Sigmoid colon (tissue), 7 donors: ENCODE measurements at regions of chr6 and their contacts with region 1.

Region 1: GRCh38 chr6:170291271-170292110 is 613 bp upstream of the DLL1 start:
- DNase-seq: peak; percentile 88
- H3K4me3 ChIP-seq: peak overlapping the region; percentile 48 to 69 (median 61)
- H3K27ac ChIP-seq: peak overlapping the region; percentile 49 to 64 (median 52)
- H3K4me1 ChIP-seq: peaks cover 0 to 62% (median 60%) of the 10 kb centered on the region in 4 donors
- H3K27me3 ChIP-seq: peaks cover 65 to 92% (median 89%) of the 10 kb centered on the region in 3 donors
- CTCF ChIP-seq: no peak
- EP300 ChIP-seq: no peak
- POLR2A ChIP-seq: no peak

Region 2: GRCh38 chr6:169789982-169790927 is 501.2 kb before region 1 on chr6:
- intact Hi-C with region 1: loop called (anchors 5 kb)
- DNase-seq: peak; percentile 90
- H3K4me3 ChIP-seq: peak overlapping the region; percentile 18 to 52 (median 48)
- H3K27ac ChIP-seq: peak overlapping the region; percentile 76 to 85 (median 79)
- H3K4me1 ChIP-seq: peaks cover 0 to 15% (median 11%) of the 10 kb centered on the region in 4 donors
- H3K27me3 ChIP-seq: no peaks in the 10 kb centered on the region
- CTCF ChIP-seq: peak; percentile 87 to 98 (median 96)
- EP300 ChIP-seq: no peak
- POLR2A ChIP-seq: no peak

Region 3: DNA sequence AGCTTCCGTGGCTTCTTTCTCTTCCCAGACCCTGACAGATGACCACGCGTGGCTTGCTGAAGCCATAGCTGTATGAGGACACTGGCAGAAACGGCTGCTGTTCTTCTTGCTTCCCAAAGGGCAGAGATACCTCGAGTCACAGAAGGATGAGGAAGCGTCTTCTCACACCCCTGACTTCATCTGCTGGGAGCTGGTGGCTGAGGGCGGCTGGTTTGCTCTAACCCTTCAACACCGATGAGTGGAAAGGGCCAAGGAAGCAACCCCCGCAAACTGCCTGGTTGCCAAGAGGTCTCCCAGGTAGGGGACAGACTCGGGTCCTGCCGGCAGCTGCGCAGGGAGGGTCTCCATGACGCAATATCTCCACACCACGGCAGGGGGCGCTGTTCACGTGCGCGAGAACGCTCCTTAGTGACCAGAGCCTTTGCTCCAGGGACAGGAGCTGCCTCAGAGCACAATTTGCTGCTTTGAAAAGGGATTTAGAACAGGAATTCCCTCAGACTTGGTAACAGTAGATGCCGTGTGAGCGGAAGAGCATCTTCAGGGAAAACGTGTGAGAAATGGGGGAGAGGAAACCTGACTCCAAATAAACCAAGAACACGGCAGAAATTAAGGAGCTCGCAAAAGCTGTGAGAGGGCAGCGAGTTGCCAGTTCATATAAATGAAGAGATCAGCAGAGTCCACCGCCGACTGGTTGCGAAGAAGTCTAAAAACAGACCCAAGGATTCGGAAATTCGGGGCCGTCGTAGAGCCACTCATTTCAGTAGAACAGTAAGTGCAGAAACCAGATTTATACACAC is 459.8 kb before region 1 on chr6:
- intact Hi-C with region 1: loop called (anchors 2 kb)
- DNase-seq: peak; percentile 83
- H3K4me3 ChIP-seq: no peak overlapping the region
- H3K27ac ChIP-seq: no peak overlapping the region
- H3K4me1 ChIP-seq: peaks cover 0 to 6% (median 0%) of the 10 kb centered on the region in 4 donors
- H3K27me3 ChIP-seq: peaks cover 0 to 18% (median 0%) of the 10 kb centered on the region in 3 donors
- CTCF ChIP-seq: peak; percentile 76 to 92 (median 84)
- EP300 ChIP-seq: no peak
- POLR2A ChIP-seq: no peak

Region 4: DNA sequence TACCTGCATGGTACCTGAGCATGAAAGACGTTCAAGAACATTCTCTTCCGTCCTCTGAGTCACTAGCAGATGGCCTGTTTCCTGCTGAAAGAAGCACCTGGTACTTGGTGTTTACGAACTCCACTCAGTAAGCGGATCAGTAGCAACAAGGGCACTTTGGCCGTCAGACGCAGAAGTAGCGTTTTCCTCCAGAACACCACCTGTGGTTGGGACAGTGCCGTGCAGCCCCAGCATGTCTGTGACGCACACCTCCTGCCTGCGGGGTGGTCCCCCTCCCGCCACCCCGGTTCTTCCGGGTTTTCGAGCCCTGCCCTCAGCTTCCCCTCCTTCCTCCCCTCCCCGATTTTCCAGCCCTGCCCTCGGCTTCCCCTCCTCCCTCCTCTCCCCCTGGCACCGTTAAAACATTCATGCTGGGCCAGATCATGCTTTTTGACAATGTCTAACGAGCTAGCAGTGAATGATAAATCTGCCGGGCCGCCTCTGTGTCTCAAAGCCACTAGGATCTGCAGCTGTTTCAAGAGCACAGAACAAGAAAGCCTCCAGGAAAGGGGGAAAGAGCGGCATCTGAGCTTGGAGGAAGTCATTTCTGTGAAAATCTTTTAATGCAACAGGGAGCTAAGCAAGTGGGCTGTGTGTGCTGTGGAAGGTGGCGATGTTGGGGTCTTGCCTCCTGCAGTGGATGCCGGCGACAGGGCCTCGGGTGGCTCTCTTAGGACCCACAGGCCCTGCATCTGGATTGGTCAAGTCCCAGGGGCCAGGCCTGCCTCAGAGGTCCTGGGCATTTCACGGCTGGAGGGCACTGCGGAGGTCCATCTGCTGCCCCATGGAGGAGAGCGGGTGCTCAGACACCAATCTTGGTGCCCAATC is 332.1 kb before region 1 on chr6:
- intact Hi-C with region 1: loop called (anchors 5 kb)
- DNase-seq: peak; percentile 82
- H3K4me3 ChIP-seq: no peak overlapping the region
- H3K27ac ChIP-seq: no peak overlapping the region
- H3K4me1 ChIP-seq: peaks cover 0 to 15% (median 10%) of the 10 kb centered on the region in 4 donors
- H3K27me3 ChIP-seq: peaks cover 4 to 17% (median 5%) of the 10 kb centered on the region in 3 donors
- CTCF ChIP-seq: no peak
- EP300 ChIP-seq: no peak
- POLR2A ChIP-seq: no peak

Region 5: GRCh38 chr6:170075659-170076223 is 215.8 kb before region 1 on chr6:
- intact Hi-C with region 1: no loop called
- DNase-seq: no peak
- H3K4me3 ChIP-seq: no peak overlapping the region
- H3K27ac ChIP-seq: no peak overlapping the region
- H3K4me1 ChIP-seq: no peaks in the 10 kb centered on the region
- H3K27me3 ChIP-seq: no peaks in the 10 kb centered on the region
- CTCF ChIP-seq: no peak
- EP300 ChIP-seq: no peak
- POLR2A ChIP-seq: no peak